ENCODE measurements at regions of chr11 and their contacts with region 1.

Region 1: GRCh38 chr11:124875943-124876817 is 10.9 kb downstream of the ROBO3 start:
- DNase-seq: peak; percentile 90
- ATAC-seq: peak; percentile 93

Region 2: DNA sequence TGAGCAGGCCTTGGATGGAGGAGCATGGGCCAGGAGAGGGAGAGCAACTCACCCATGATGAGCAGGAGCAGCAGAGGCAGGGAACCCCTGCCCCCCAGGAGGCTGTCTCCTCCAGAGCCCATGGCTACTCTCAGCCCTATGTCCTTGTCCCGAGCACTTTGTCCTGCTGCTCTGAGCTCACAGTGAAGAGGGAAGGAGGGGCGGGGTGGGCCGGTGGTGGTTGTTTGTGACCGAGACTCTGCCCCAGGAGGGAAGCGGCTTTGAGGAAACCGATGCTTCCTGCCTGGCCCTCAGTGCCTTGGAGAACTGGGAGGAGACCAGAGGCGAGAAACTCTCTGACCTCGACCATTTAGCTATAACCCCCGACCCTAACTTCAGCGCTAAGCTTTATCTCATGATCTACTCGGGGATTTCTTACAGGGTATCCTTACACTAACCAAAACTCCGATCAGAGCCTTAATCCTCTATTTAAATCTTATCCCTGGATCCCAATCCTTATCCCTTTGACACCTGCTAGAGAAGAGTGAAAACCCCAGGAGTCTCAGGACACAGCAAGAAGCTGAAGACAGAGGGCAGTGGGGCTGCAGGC is 21.6 kb after region 1 on chr11 and contains the start of gene ROBO4:
- intact Hi-C with region 1: loop called (anchors 2 kb)
- DNase-seq: no peak
- ATAC-seq: peak; percentile 40
- total RNA-seq, gene ROBO4: 27.6 TPM

Region 3: GRCh38 chr11:124920870-124921609 is 44.9 kb after region 1 on chr11:
- intact Hi-C with region 1: loop called (anchors 1 kb)
- DNase-seq: peak; percentile 82
- ATAC-seq: peak; percentile 64

Region 4: DNA sequence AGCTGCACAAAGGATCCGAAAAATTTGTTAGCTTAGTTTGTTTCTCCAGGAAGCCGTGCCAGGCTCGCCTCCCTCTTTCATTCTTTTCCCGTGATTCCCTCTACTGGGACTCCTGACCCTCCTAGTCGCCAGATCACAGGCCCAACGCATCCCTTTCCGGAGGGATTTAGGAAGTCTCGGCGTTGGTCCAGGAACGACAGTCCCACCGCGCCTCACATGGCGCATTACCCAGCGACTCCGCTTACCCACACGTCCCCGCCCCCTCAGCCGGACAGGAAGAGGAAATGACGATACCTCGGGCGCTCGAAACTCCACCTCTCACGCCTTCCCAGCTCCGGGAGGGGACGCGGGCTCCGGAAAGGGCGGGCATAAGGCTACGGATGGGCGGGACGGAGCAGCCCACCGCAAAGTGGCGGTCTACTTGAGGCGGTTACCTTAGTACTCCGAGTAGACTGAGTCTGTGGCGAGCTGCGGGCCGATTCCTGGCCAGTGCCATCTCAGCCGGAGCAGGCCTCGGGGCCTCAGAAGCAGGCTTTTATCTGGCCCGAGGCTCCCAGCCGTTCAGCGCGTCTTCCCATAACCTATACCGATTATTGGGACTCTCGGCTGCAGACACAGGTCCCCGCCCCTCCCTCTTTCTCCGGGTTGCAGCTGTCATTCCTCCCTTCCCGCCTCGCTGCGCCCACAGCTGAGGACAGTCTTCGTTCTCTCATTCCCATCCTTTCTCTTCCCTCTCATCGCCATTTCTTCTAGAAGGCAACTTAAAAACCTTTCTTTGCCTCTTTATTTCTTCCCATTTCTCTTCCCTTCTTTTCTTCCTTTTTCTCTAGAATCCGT is 77.8 kb after region 1 on chr11 and contains the start of gene CCDC15:
- intact Hi-C with region 1: loop called (anchors 5 kb)
- DNase-seq: peak; percentile 99
- ATAC-seq: peak; percentile 100
- total RNA-seq, gene CCDC15: 0.38 TPM

Measured in Right ventricle myocardium inferior (tissue), 1 donor.